ENCODE measurements at regions of chr1 and their contacts with region 1.

Region 1: DNA sequence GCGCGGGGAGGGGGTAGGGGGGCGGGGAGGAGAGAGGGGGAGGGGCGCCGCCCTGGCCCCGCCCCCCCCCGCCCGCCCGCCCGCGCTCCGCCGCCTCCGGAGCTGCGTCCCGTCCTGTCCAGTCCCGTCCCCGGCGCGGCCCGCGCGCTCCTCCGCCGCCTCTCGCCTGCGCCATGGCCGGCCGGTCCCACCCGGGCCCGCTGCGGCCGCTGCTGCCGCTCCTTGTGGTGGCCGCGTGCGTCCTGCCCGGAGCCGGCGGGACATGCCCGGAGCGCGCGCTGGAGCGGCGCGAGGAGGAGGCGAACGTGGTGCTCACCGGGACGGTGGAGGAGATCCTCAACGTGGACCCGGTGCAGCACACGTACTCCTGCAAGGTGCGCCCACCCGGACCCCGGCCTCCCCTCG is at the start of gene AGRN:
- DNase-seq: peak in 3 of 5 donors; percentile 68 to 71 (median 69)
- H3K4me3 ChIP-seq: peak within 1 kb of the TSS; percentile 64
- H3K27ac ChIP-seq: peak within 1 kb of the TSS; percentile 69 to 84
- H3K4me1 ChIP-seq: no peaks in the 10 kb centered on the region
- H3K27me3 ChIP-seq: no peaks in the 10 kb centered on the region
- CTCF ChIP-seq: no peak
- EP300 ChIP-seq: no peak
- POLR2A ChIP-seq: no peak
- total RNA-seq, gene AGRN: 10.0 to 138 (median 14.4) TPM

Region 2: GRCh38 chr1:904310-904950 is 115.6 kb before region 1 on chr1:
- intact Hi-C with region 1: no loop called
- DNase-seq: peak; percentile 65 to 91 (median 75)
- H3K4me3 ChIP-seq: peak overlapping the region; percentile 25
- H3K27ac ChIP-seq: no peak overlapping the region
- H3K4me1 ChIP-seq: no peaks in the 10 kb centered on the region
- H3K27me3 ChIP-seq: no peaks in the 10 kb centered on the region
- CTCF ChIP-seq: peak; percentile 71 to 88 (median 85)
- EP300 ChIP-seq: no peak
- POLR2A ChIP-seq: no peak

Region 3: DNA sequence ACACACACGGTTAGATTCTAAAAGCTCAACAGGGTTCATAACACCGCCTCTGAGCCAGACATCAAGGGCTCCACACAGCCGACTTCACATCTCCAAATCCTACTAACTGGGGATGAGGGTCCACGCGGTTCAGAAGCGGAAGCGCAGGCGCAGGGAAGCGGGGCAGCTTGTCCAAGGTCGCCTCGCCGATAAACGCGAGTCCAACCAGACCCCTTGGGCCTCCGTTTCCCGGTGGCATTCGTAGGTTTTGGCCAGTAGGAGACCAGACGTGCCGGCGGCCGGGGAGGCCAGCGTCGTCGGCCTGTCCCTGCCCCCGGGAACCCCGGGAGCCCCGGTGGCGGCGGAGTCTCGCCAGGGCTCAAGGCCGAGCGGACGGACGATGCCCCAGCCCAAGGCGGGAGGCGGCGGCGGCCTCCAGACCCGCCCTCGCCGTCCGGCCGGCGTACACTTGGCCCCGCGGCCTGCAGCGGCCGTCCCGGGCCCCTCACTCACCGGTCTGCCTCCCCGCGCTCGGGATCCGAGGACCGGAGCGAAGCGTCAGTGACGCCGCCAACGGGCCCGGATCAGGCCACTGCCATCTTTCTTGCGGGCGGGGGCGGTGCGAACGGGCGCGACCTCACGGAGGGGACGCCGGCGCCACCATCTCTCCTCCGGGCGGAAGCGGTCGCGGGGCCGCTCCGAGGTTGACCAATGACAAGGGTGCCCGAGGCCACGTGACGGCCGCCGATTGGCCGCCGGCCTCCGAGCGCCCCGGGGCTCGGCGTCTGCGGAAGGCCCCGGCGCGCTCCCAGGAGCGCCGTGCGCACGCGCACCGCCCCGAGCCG is 211.6 kb after region 1 on chr1 and contains the start of gene SDF4:
- intact Hi-C with region 1: loop called in 1 of 4 experiments (anchors 10 kb)
- DNase-seq: peak; percentile 94 to 98 (median 96)
- H3K4me3 ChIP-seq: peak within 1 kb of the TSS; percentile 98
- H3K27ac ChIP-seq: peak within 1 kb of the TSS; percentile 75 to 84
- H3K4me1 ChIP-seq: peaks cover 19% of the 10 kb centered on the region
- H3K27me3 ChIP-seq: no peaks in the 10 kb centered on the region
- CTCF ChIP-seq: no peak
- EP300 ChIP-seq: no peak
- POLR2A ChIP-seq: peak; percentile 31
- total RNA-seq, gene SDF4: 57.1 to 145 (median 116) TPM